K562 (cell line): ENCODE measurements at regions of chr3 and their contacts with region 1.

Region 1: DNA sequence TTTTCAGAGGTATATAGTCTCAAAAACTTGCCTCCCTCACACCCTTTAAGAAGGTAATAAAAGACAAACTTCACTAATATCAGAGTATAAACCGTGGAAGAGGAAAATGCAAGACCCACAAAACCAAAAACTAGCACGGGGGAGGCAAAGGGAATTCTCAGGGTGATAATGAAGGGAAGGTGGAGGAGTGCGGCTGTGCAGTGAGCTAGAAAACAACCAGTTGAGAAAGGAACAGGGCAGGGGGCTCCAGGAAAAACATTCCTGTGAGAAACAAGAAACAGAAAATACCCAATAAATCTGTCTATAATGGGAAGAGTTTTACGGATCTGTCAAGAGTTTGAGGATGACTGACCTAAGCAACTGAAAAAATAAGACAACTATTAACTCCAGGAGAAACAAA is 31.6 kb downstream of the TAMM41 start:
- DNase-seq: no peak
- ATAC-seq: no peak
- H3K4me3 ChIP-seq: no peak overlapping the region
- H3K27ac ChIP-seq: no peak overlapping the region
- H3K4me1 ChIP-seq: no peaks in the 10 kb centered on the region
- H3K27me3 ChIP-seq: no peaks in the 10 kb centered on the region
- CTCF ChIP-seq: no peak
- EP300 ChIP-seq: no peak
- POLR2A ChIP-seq: no peak
- RAD21 ChIP-seq: no peak

Region 2: GRCh38 chr3:11826628-11827265 is 11.6 kb after region 1 on chr3:
- CTCF ChIA-PET with region 1: no interaction called
- POLR2A ChIA-PET with region 1: interaction called, 11 read pairs
- in situ Hi-C with region 1: no loop called
- intact Hi-C with region 1: no loop called
- DNase-seq: no peak
- ATAC-seq: no peak
- H3K4me3 ChIP-seq: no peak overlapping the region
- H3K27ac ChIP-seq: no peak overlapping the region
- H3K4me1 ChIP-seq: no peaks in the 10 kb centered on the region
- H3K27me3 ChIP-seq: no peaks in the 10 kb centered on the region
- CTCF ChIP-seq: no peak
- EP300 ChIP-seq: no peak
- POLR2A ChIP-seq: no peak
- RAD21 ChIP-seq: no peak